ENCODE measurements at regions of chr11 and their contacts with region 1.

Region 1: GRCh38 chr11:134328433-134328832 is 3.4 kb upstream of the GLB1L2 start:
- DNase-seq: no peak
- H3K4me3 ChIP-seq: no peak overlapping the region
- H3K27ac ChIP-seq: no peak overlapping the region
- H3K4me1 ChIP-seq: peaks cover 11% of the 10 kb centered on the region
- H3K27me3 ChIP-seq: no peaks in the 10 kb centered on the region
- CTCF ChIP-seq: no peak
- POLR2A ChIP-seq: no peak

Region 2: DNA sequence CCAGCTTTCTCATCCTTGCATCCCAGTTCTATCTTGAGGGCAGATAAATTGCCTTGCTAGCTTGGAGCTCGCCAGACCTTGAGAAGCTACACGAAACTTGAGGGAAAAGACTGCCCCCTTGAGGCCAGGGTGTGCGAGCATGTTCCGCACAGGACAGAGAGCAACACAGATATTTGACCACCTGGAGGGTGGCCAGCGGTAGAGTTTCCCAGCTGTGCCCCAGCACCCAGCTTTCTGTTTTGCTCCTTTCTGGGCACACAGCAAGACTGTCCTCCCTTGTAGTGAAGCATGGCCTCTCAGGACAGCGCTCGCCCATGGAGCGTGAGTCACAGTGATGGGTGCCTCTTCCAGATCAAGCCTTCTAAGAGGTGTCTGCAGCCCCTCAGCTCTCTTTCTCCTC is 506.7 kb before region 1 on chr11:
- intact Hi-C with region 1: no loop called
- DNase-seq: peak; percentile 87
- H3K4me3 ChIP-seq: no peak overlapping the region
- H3K27ac ChIP-seq: no peak overlapping the region
- H3K4me1 ChIP-seq: no peaks in the 10 kb centered on the region
- H3K27me3 ChIP-seq: no peaks in the 10 kb centered on the region
- CTCF ChIP-seq: peak; percentile 40 to 63 (median 58)
- POLR2A ChIP-seq: no peak

Region 3: DNA sequence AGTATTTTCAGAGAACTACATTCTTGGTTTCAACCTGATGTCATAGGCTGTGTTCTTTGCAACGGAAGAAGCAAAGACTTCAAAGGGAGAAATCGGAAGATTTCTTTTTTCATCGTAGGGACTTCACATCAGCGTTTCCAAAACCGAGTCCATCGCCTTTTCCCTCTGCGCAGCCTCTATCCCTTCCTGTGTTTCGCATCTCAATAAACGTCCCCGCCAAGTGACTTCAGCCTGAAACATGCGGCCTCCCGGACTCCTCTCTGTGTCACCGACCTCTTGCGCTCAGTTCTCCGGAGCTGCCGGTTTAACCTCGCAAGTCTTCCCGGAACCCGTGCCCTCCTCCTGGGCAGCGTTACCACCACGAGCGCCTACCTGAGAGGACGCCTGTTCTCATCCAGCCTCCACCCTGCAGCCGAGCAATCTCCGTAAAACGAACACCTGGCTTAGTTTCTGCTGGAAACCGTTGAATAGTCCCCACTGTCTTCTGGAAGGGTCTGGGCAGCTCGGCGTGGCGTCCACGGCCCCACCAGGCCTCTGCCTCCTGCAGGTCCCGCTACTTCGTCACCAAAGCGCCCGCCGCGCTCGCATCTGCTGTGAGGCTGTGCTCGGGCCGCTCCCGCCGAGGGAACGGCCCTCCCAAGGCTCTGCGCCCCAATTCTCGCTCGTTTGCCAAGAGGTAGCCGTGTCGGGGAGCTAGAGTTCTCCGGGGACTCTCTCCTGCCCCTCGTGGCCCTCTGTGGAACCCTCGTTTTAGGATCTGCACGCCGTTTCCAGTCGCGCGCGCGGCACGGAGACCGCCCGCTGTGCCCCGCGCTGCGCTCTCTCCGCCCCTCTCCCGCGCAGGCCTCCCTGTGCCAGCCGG is 52.7 kb before region 1 on chr11 and contains the start of gene GLB1L3:
- intact Hi-C with region 1: loop called (anchors 10 kb)
- DNase-seq: peak; percentile 66
- H3K4me3 ChIP-seq: peak within 1 kb of the TSS; percentile 51 to 72
- H3K27ac ChIP-seq: peak within 1 kb of the TSS; percentile 52 to 72
- H3K4me1 ChIP-seq: peaks cover 7% of the 10 kb centered on the region
- H3K27me3 ChIP-seq: no peaks in the 10 kb centered on the region
- CTCF ChIP-seq: peak in 2 of 3 experiments; percentile 16 to 30
- POLR2A ChIP-seq: no peak
- total RNA-seq, gene GLB1L3: 15.6 to 21.3 TPM

Region 4: GRCh38 chr11:134372964-134373363 is 44.5 kb after region 1 on chr11:
- intact Hi-C with region 1: no loop called
- DNase-seq: no peak
- H3K4me3 ChIP-seq: no peak overlapping the region
- H3K27ac ChIP-seq: no peak overlapping the region
- H3K4me1 ChIP-seq: no peaks in the 10 kb centered on the region
- H3K27me3 ChIP-seq: no peaks in the 10 kb centered on the region
- CTCF ChIP-seq: no peak
- POLR2A ChIP-seq: no peak